ENCODE measurements at regions of chr18 and their contacts with region 1.

Region 1: GRCh38 chr18:59697236-59697932 is at the start of gene CCBE1:
- DNase-seq: peak; percentile 72
- H3K4me3 ChIP-seq: peak within 1 kb of the TSS; percentile 36 to 55 (median 46)
- H3K27ac ChIP-seq: peak within 1 kb of the TSS; percentile 62 to 91 (median 70)
- H3K4me1 ChIP-seq: peaks cover 0 to 37% (median 7%) of the 10 kb centered on the region in 4 donors
- H3K27me3 ChIP-seq: peaks cover 41% of the 10 kb centered on the region
- CTCF ChIP-seq: peak; percentile 80 to 94 (median 90)
- EP300 ChIP-seq: no peak
- POLR2A ChIP-seq: peak; percentile 12
- total RNA-seq, gene CCBE1: 6.1 to 43.0 (median 15.7) TPM

Region 2: DNA sequence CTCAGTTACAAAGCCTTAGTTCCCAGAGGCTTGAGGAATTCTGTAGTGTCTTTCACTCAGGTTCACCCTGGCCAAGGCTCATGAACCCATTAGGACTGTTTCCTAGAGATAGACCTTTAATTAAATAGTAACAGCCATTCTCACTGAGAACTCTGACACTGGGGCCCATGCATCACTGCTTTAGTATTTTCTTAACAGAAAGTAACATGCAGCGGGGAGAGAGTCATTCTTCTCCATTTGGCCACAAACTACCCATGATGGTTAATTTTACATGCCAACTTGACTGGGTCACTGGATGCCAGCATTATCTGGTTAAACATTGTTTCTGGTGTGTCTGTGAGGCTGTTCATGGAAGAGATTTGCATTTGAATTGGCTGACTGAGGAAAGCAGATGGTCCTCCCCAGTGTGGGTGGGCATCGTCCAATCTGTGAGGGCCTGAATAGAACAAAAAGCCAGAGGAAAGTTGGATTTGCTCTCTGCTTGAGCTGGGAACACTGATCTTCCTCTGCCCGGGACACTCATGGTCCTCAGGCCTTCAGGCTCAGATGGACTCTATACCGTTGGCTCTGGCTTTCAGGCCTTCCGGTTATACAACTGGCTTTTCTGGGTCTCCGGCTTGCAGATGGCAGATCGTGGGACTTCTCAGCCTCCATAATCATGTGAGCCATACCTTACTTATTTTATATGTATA is 373.3 kb before region 1 on chr18:
- in situ Hi-C with region 1: no loop called
- intact Hi-C with region 1: no loop called
- DNase-seq: no peak
- H3K4me3 ChIP-seq: no peak overlapping the region
- H3K27ac ChIP-seq: no peak overlapping the region
- H3K4me1 ChIP-seq: no peaks in the 10 kb centered on the region
- H3K27me3 ChIP-seq: no peaks in the 10 kb centered on the region
- CTCF ChIP-seq: no peak
- EP300 ChIP-seq: no peak
- POLR2A ChIP-seq: no peak

Region 3: GRCh38 chr18:59459369-59460079 is 237.9 kb before region 1 on chr18:
- in situ Hi-C with region 1: no loop called
- intact Hi-C with region 1: loop called (anchors 10 kb)
- DNase-seq: no peak
- H3K4me3 ChIP-seq: no peak overlapping the region
- H3K27ac ChIP-seq: no peak overlapping the region
- H3K4me1 ChIP-seq: peaks cover 0 to 3% (median 0%) of the 10 kb centered on the region in 4 donors
- H3K27me3 ChIP-seq: no peaks in the 10 kb centered on the region
- CTCF ChIP-seq: peak; percentile 40 to 52 (median 45)
- EP300 ChIP-seq: no peak
- POLR2A ChIP-seq: no peak

Region 4: GRCh38 chr18:59566533-59566971 is 130.8 kb before region 1 on chr18:
- in situ Hi-C with region 1: no loop called
- intact Hi-C with region 1: loop called (anchors 5 kb)
- DNase-seq: no peak
- H3K4me3 ChIP-seq: no peak overlapping the region
- H3K27ac ChIP-seq: peak overlapping the region in 2 of 4 donors; percentile 39 to 56
- H3K4me1 ChIP-seq: peaks cover 0 to 7% (median 0%) of the 10 kb centered on the region in 4 donors
- H3K27me3 ChIP-seq: no peaks in the 10 kb centered on the region
- CTCF ChIP-seq: no peak
- EP300 ChIP-seq: no peak
- POLR2A ChIP-seq: no peak

Region 5: GRCh38 chr18:59631583-59632181 is 65.7 kb before region 1 on chr18:
- in situ Hi-C with region 1: no loop called
- intact Hi-C with region 1: loop called (anchors 10 kb)
- DNase-seq: no peak
- H3K4me3 ChIP-seq: no peak overlapping the region
- H3K27ac ChIP-seq: peak overlapping the region in 1 of 4 donors; percentile 81
- H3K4me1 ChIP-seq: peaks cover 0 to 6% (median 1%) of the 10 kb centered on the region in 4 donors
- H3K27me3 ChIP-seq: no peaks in the 10 kb centered on the region
- CTCF ChIP-seq: peak; percentile 31 to 42 (median 41)
- EP300 ChIP-seq: no peak
- POLR2A ChIP-seq: no peak